Cardiac septum (tissue), 1 donor: ENCODE measurements at regions of chr17 and their contacts with region 1.

Region 1: DNA sequence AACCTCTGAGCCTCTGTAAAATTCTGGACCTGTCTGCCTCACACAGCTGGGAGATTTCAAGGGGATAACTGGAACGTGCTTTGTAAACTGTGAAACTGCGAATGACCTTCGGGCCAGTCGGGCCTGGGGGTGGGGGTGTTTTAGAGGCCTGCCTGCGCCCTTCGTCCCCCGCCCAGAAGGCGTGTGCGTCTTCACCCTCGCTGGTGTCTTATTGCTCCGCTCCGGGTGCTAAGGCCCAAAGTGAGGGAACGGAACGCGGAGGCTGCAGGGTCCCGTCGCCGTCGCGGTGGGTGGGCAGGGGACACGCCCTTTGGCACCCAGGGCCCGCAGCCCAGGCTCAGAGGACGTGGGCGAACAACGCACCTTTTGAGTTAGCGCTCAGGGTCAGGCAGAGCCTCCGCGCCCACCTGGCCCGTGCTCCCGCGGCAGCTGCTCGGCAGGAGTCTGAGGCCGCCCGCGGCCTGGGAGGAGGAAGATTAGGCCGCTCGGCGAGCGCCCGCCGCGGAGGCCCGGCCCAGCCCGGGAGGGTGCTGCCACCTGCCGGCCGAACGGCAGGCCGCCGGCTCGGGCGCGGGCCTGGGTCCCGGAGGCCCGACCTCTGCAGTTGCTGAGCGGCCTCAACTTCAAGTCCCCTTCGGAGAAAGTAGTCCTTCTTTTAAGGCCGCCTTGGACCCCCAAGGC is 29.7 kb downstream of the DCAKD start:
- DNase-seq: peak; percentile 84

Region 2: DNA sequence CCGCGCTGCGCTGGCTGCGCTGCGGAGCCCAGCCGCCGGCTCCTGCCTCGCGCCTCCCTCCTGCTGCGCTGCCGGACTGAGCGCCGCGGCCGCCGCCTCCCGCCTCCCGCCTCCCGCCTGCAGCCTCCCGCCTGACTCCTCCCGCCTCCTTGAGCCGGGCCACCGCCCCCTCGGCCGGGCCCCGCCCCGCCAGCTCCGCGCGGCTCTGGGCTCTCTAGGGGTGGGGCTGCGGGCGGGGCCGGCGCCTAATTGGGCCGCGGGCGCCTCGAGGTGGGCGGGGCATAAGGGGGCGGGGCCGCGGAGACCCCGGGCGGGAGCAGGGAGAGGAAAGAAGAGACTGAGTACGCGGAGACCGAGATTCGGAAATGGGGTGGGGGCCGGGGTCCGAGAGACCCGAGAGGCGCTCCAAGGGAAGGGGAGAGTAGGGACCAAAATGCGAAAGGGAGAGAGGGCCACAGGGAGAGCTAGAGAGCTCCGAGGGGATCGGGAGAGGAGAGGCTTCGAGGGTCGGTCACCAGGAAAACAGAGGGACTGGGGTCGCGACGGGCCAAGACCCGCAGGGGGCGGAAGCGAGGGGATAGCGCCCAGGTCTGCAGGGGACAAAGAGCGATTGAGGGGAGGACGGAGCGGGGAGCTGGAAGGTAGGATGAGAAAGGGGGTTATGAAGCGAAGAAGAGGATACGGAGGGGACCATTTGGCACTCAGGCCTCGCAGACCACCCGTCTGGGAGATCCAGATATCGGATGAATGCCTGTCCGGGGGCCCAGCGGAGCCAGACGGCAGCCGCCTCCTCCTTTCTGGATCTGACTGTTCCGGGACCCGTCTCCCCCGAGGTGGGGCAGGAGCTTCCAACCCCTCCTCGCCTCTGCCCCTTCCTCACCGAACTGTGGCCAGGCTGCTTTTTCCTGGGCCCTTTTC is 53.3 kb before region 1 on chr17 and contains the start of gene C1QL1:
- intact Hi-C with region 1: loop called (anchors 5 kb)
- DNase-seq: peak; percentile 94
- total RNA-seq, gene C1QL1: 0.97 TPM

Region 3: GRCh38 chr17:44997733-44998520 is 23.8 kb before region 1 on chr17:
- intact Hi-C with region 1: no loop called
- DNase-seq: no peak

Region 4: GRCh38 chr17:45051060-45051719 is 29.4 kb after region 1 on chr17 and contains the start of gene DCAKD:
- intact Hi-C with region 1: no loop called
- DNase-seq: peak; percentile 96
- total RNA-seq, gene DCAKD: 32.1 TPM

Region 5: DNA sequence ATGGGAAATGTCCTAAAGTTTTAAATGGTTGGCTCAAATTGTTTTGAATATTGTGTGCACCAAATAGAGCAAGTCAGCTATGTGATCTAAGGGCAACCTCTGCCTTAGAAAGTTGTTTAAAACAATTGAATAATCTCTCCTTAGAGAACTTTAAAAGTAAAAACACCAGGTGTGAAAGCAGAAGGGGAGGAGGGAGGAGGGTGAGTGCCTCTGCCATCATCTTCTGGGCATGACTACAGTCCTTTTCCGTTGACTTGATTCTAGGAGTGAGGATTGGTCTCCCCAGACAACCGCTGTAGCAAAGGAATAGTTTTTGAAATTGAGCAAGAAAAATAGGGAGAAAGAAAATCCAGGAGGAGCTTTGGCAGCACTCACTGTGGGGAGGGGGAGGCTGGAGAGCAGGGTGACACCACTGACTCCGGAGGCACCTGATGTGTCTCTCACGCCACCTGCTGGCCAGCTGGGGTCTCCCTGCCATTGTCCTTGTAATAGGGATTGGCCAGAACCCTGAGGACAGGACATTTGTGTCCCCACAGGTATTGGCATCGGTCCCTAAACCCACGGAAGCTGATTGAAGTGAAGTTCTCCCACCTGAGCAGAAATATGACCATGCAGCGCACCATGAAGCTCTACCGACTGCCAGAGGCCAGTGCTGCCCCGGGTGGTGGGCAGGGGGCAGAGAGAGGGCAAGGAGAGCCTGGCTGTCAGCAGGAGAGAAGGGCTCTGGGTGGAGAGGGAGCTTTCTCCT is 77.3 kb after region 1 on chr17:
- intact Hi-C with region 1: loop called (anchors 5 kb)
- DNase-seq: peak; percentile 94